Posterior vena cava (tissue), 2 donors: ENCODE measurements at regions of chr6 and their contacts with region 1.

Region 1: GRCh38 chr6:162262466-162263196 is 464.9 kb downstream of the PRKN start:
- DNase-seq: no peak

Region 2: DNA sequence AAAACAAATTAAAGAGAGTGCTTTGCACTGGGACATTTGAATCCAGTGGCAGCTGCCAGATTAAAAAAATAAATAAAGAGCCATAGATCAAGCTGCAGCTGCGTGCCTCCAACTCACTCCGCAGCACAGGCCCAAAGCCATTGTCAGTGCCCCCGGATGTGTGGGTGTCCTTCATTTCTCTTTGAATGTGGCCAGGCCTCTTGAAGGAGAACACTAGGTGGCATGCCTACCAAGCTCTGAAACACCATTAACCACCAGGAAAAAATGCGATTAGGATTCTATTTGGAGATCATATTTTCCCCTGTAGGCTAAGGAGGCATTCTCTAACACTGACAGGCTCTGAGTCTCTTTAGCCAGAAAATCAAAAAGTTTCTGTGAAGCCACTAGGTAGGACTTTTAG is 84.9 kb before region 1 on chr6:
- intact Hi-C with region 1: no loop called
- DNase-seq: no peak

Region 3: GRCh38 chr6:162203287-162203686 is 59.3 kb before region 1 on chr6:
- intact Hi-C with region 1: no loop called
- DNase-seq: no peak

Region 4: DNA sequence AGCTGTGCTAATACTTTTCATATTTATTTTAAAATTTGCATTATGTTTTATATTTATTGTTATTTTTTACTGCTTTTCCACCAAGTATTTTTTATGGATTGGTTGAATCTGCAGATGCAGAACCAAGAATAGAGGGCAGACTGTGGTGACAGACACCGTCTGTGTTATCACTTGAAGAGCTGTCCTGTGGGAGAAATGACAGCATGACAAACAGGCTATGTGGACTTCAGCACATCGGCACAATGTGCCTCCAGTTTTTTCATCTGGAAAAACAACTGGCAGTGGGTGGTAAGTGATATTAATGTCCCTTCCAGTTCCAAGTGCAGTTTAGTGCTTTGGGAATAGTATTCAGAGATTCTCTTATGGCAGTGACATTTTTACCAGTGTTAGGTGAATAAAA is 28.0 kb before region 1 on chr6:
- intact Hi-C with region 1: loop called in 1 of 2 experiments (anchors 1 kb)
- DNase-seq: no peak

Region 5: GRCh38 chr6:163679753-163680152 is 1417.1 kb after region 1 on chr6:
- intact Hi-C with region 1: no loop called
- DNase-seq: no peak